Heart right ventricle (tissue), 16 donors: ENCODE measurements at regions of chr2 and their contacts with region 1.

Region 1: GRCh38 chr2:119819846-119820245 is 60.1 kb downstream of the PTPN4 start:
- DNase-seq: no peak
- ATAC-seq: no peak
- H3K4me3 ChIP-seq: no peak overlapping the region
- H3K27ac ChIP-seq: peak overlapping the region in 3 of 10 donors; percentile 6 to 45 (median 16)
- H3K4me1 ChIP-seq: peaks cover 0 to 34% (median 11%) of the 10 kb centered on the region in 9 donors
- H3K27me3 ChIP-seq: no peaks in the 10 kb centered on the region
- CTCF ChIP-seq: no peak

Region 2: GRCh38 chr2:119402645-119403560 is 416.9 kb before region 1 on chr2:
- intact Hi-C with region 1: no loop called
- DNase-seq: peak in 1 of 2 donors; percentile 60
- ATAC-seq: peak; percentile 69 to 92 (median 82)
- H3K4me3 ChIP-seq: no peak overlapping the region
- H3K27ac ChIP-seq: peak overlapping the region in 9 of 10 donors; percentile 3 to 58 (median 40)
- H3K4me1 ChIP-seq: peaks cover 0 to 12% (median 6%) of the 10 kb centered on the region in 9 donors
- H3K27me3 ChIP-seq: no peaks in the 10 kb centered on the region
- CTCF ChIP-seq: no peak

Region 3: DNA sequence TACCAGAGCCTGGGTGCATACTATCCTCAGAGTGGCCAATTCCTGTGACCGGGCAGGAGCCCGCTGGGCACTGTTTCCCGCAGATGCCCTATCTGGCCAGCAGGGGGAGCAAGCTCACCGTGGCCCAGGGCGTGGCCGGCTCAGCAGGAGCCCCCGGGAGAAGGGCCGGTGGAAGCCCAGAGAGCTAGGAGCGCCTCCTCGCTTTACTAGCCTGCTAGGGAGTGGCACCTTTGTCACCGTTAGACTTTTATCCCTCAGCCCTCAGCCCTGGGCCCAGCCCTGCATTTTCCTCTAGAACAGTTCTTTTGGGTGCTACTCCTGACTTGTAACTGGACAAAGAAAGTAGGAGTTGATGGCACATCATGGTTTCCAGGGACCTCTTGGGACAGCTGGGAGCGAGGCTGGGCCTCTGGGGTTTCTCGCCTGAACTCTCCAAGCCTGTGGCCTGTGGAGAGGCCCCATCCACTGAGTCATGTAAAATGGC is 116.9 kb before region 1 on chr2:
- intact Hi-C with region 1: loop called in 6 of 10 experiments (anchors 2 to 5 kb)
- DNase-seq: peak; percentile 59 to 63
- ATAC-seq: peak; percentile 79 to 91 (median 89)
- H3K4me3 ChIP-seq: no peak overlapping the region
- H3K27ac ChIP-seq: no peak overlapping the region
- H3K4me1 ChIP-seq: peaks cover 0 to 23% (median 5%) of the 10 kb centered on the region in 9 donors
- H3K27me3 ChIP-seq: no peaks in the 10 kb centered on the region
- CTCF ChIP-seq: peak; percentile 87 to 97 (median 92)

Region 4: GRCh38 chr2:119897736-119898395 is 78.0 kb after region 1 on chr2:
- intact Hi-C with region 1: no loop called
- DNase-seq: no peak
- ATAC-seq: no peak
- H3K4me3 ChIP-seq: no peak overlapping the region
- H3K27ac ChIP-seq: no peak overlapping the region
- H3K4me1 ChIP-seq: no peaks in the 10 kb centered on the region
- H3K27me3 ChIP-seq: no peaks in the 10 kb centered on the region
- CTCF ChIP-seq: no peak

Region 5: GRCh38 chr2:120396886-120397811 is 577.3 kb after region 1 on chr2:
- intact Hi-C with region 1: no loop called
- DNase-seq: no peak
- ATAC-seq: peak in 1 of 8 donors; percentile 16
- H3K4me3 ChIP-seq: no peak overlapping the region
- H3K27ac ChIP-seq: no peak overlapping the region
- H3K4me1 ChIP-seq: no peaks in the 10 kb centered on the region
- H3K27me3 ChIP-seq: peaks cover 0 to 48% (median 34%) of the 10 kb centered on the region in 7 donors
- CTCF ChIP-seq: no peak